GM10248 (cell line): ENCODE measurements at regions of chr11 and their contacts with region 1.

Region 1: GRCh38 chr11:19951558-19952115 is 208.6 kb downstream of the DBX1 start:
- DNase-seq: peak; percentile 39
- CTCF ChIP-seq: peak; percentile 38

Region 2: DNA sequence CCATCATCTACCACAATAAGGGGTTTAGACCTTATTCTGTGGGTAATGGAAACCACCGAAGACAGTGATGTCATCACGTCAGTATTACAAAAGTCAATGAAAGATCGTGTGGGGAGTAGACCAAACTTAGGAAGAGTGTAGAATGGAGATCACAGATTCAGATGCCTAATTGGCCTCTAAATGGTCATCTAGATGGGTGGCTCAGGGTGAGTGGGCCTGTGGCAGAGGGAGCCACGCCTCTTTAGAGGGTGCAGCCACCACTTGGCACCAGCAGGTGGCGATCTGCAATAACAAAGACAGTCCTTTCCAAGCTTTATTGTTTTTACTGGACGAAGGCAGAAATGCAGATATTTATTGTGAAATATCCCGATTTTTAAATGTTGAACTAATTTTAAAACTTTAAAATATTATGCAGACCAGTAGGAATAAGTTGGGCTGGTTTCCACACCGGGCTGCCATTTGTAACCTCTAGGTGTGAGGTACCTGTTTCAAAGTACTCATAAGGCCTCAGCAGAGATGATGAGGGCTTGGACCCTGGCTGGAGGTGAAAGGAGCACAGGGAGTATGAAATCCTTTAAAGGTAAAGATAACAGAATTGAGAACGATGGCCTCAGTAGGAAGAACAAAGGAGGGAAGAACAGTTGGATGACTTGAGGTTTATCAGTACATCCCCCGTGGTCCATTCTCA is 13.3 kb before region 1 on chr11:
- CTCF ChIA-PET with region 1: interaction called, 21 read pairs
- POLR2A ChIA-PET with region 1: no interaction called
- DNase-seq: peak; percentile 70
- CTCF ChIP-seq: peak; percentile 74

Region 3: GRCh38 chr11:19962801-19963175 is 11.2 kb after region 1 on chr11:
- CTCF ChIA-PET with region 1: interaction called, 24 read pairs
- POLR2A ChIA-PET with region 1: no interaction called
- DNase-seq: no peak
- CTCF ChIP-seq: no peak

Region 4: GRCh38 chr11:20110908-20111669 is 159.5 kb after region 1 on chr11:
- CTCF ChIA-PET with region 1: interaction called, 45 read pairs
- POLR2A ChIA-PET with region 1: no interaction called
- DNase-seq: peak; percentile 76
- CTCF ChIP-seq: peak; percentile 86